Dendritic cell treated with granulocyte-macrophage colony-stimulating factor and Interleukin-4, amounts not matched to agents 40 ng/mL and 50 ng/mL, for 4 days (primary cell): ENCODE measurements at regions of chr2 and their contacts with region 1.

Region 1: GRCh38 chr2:216404010-216404618 is 8.2 kb upstream of the SMARCAL1 start:
- H3K4me3 Mint-ChIP-seq: no peak overlapping the region
- H3K27ac Mint-ChIP-seq: no peak overlapping the region
- H3K4me1 Mint-ChIP-seq: no peaks in the 10 kb centered on the region
- H3K27me3 Mint-ChIP-seq: peaks cover 7% of the 10 kb centered on the region

Region 2: DNA sequence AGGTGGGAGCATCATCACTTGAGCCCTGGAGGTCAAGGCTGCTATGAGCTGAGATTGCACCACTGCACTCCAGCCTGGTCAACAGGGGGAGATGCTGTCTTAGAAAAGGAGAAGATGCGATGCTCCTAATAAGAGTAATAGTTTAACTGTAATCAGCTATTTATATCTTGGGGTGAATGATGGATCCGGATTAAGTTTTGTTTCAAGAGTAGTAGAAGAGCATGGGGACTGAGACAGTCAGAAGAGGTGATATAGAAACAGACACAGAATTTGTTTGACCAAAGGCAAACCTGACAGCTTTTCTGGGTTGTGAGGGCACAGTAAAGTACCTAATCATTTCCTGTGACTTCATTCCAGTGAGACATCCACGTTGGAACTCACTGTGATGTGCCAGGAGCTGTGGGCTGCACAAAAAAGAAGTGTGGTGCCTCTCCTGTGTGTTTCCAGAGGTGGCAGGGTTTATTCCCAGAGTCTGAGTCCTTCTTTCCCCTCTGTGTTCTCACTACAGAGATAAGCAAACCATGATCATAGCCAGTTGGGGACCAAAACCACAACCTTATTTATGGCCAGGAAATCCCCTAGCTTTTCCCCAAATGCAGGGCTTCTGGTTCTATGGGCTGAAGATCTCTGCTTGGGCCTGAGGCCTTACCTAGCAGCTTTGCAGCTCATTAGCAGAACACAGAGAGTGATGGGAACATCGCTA is 181.3 kb before region 1 on chr2:
- intact Hi-C with region 1: loop called (anchors 2 kb)
- H3K4me3 Mint-ChIP-seq: no peak overlapping the region
- H3K27ac Mint-ChIP-seq: no peak overlapping the region
- H3K4me1 Mint-ChIP-seq: no peaks in the 10 kb centered on the region
- H3K27me3 Mint-ChIP-seq: no peaks in the 10 kb centered on the region

Region 3: GRCh38 chr2:216328347-216328746 is 75.8 kb before region 1 on chr2:
- intact Hi-C with region 1: loop called (anchors 5 kb)
- H3K4me3 Mint-ChIP-seq: no peak overlapping the region
- H3K27ac Mint-ChIP-seq: no peak overlapping the region
- H3K4me1 Mint-ChIP-seq: no peaks in the 10 kb centered on the region
- H3K27me3 Mint-ChIP-seq: no peaks in the 10 kb centered on the region